Caco-2 (cell line): ENCODE measurements at regions of chr16 and their contacts with region 1.

Region 1: GRCh38 chr16:58129097-58129936 is at the start of gene CFAP20:
- DNase-seq: peak; percentile 100
- H3K4me3 ChIP-seq: peak within 1 kb of the TSS; percentile 92
- H3K4me3 Mint-ChIP-seq: peak within 1 kb of the TSS; percentile 68
- H3K27ac Mint-ChIP-seq: peak within 1 kb of the TSS; percentile 49
- H3K4me1 ChIP-seq: peaks cover 21% of the 10 kb centered on the region
- H3K4me1 Mint-ChIP-seq: peaks cover 21% of the 10 kb centered on the region
- H3K27me3 ChIP-seq: no peaks in the 10 kb centered on the region
- H3K27me3 Mint-ChIP-seq: no peaks in the 10 kb centered on the region
- CTCF ChIP-seq: no peak
- total RNA-seq, gene CFAP20: 69.4 and 73.2 TPM in 2 replicates

Region 2: GRCh38 chr16:57899771-57900661 is 229.3 kb before region 1 on chr16:
- CTCF ChIA-PET with region 1: no interaction called
- POLR2A ChIA-PET with region 1: interaction called, 5 read pairs
- intact Hi-C with region 1: loop called (anchors 5 kb)
- DNase-seq: peak; percentile 83 to 84
- H3K4me3 ChIP-seq: no peak overlapping the region
- H3K4me3 Mint-ChIP-seq: no peak overlapping the region
- H3K27ac Mint-ChIP-seq: no peak overlapping the region
- H3K4me1 ChIP-seq: peaks cover 10% of the 10 kb centered on the region
- H3K4me1 Mint-ChIP-seq: peaks cover 20% of the 10 kb centered on the region
- H3K27me3 ChIP-seq: no peaks in the 10 kb centered on the region
- H3K27me3 Mint-ChIP-seq: no peaks in the 10 kb centered on the region
- CTCF ChIP-seq: peak; percentile 92 to 96

Region 3: GRCh38 chr16:58057121-58057520 is 72.2 kb before region 1 on chr16:
- CTCF ChIA-PET with region 1: no interaction called
- POLR2A ChIA-PET with region 1: no interaction called
- intact Hi-C with region 1: no loop called
- DNase-seq: no peak
- H3K4me3 ChIP-seq: no peak overlapping the region
- H3K4me3 Mint-ChIP-seq: no peak overlapping the region
- H3K27ac Mint-ChIP-seq: no peak overlapping the region
- H3K4me1 ChIP-seq: no peaks in the 10 kb centered on the region
- H3K4me1 Mint-ChIP-seq: no peaks in the 10 kb centered on the region
- H3K27me3 ChIP-seq: no peaks in the 10 kb centered on the region
- H3K27me3 Mint-ChIP-seq: no peaks in the 10 kb centered on the region
- CTCF ChIP-seq: no peak

Region 4: DNA sequence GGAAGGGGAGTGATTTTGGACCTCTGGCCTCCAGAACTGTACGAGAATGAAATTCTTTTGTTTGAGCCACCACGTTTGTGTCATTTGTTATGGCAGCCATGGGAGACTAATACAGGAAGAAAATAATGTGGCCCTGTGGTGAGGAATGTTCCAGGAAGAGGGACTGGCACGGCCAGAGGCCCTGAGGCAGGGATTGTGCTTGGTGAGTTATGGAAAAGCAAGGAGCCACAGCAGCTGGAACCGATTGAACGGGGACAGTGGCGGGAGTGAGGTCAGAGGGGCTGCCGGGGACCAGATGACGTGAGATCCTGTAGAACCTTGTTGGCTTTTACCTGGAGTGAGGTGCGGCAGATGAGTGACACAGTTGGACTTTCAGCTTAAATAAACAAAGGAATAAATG is 51.5 kb before region 1 on chr16:
- CTCF ChIA-PET with region 1: no interaction called
- POLR2A ChIA-PET with region 1: no interaction called
- intact Hi-C with region 1: no loop called
- DNase-seq: no peak
- H3K4me3 ChIP-seq: no peak overlapping the region
- H3K4me3 Mint-ChIP-seq: no peak overlapping the region
- H3K27ac Mint-ChIP-seq: no peak overlapping the region
- H3K4me1 ChIP-seq: no peaks in the 10 kb centered on the region
- H3K4me1 Mint-ChIP-seq: no peaks in the 10 kb centered on the region
- H3K27me3 ChIP-seq: no peaks in the 10 kb centered on the region
- H3K27me3 Mint-ChIP-seq: no peaks in the 10 kb centered on the region
- CTCF ChIP-seq: no peak

Region 5: GRCh38 chr16:58098207-58099096 is 30.9 kb before region 1 on chr16:
- CTCF ChIA-PET with region 1: interaction called, 12 read pairs
- POLR2A ChIA-PET with region 1: interaction called, 4 read pairs
- intact Hi-C with region 1: no loop called
- DNase-seq: no peak
- H3K4me3 ChIP-seq: no peak overlapping the region
- H3K4me3 Mint-ChIP-seq: no peak overlapping the region
- H3K27ac Mint-ChIP-seq: no peak overlapping the region
- H3K4me1 ChIP-seq: no peaks in the 10 kb centered on the region
- H3K4me1 Mint-ChIP-seq: no peaks in the 10 kb centered on the region
- H3K27me3 ChIP-seq: no peaks in the 10 kb centered on the region
- H3K27me3 Mint-ChIP-seq: peaks cover 5% of the 10 kb centered on the region
- CTCF ChIP-seq: no peak

Region 6: GRCh38 chr16:58152246-58152868 is 23.0 kb after region 1 on chr16:
- CTCF ChIA-PET with region 1: no interaction called
- POLR2A ChIA-PET with region 1: interaction called, 17 read pairs
- intact Hi-C with region 1: loop called (anchors 1 kb)
- DNase-seq: peak in 1 of 2 experiments; percentile 35
- H3K4me3 ChIP-seq: no peak overlapping the region
- H3K4me3 Mint-ChIP-seq: no peak overlapping the region
- H3K27ac Mint-ChIP-seq: peak overlapping the region; percentile 32
- H3K4me1 ChIP-seq: peaks cover 11% of the 10 kb centered on the region
- H3K4me1 Mint-ChIP-seq: no peaks in the 10 kb centered on the region
- H3K27me3 ChIP-seq: no peaks in the 10 kb centered on the region
- H3K27me3 Mint-ChIP-seq: no peaks in the 10 kb centered on the region
- CTCF ChIP-seq: no peak

Region 7: DNA sequence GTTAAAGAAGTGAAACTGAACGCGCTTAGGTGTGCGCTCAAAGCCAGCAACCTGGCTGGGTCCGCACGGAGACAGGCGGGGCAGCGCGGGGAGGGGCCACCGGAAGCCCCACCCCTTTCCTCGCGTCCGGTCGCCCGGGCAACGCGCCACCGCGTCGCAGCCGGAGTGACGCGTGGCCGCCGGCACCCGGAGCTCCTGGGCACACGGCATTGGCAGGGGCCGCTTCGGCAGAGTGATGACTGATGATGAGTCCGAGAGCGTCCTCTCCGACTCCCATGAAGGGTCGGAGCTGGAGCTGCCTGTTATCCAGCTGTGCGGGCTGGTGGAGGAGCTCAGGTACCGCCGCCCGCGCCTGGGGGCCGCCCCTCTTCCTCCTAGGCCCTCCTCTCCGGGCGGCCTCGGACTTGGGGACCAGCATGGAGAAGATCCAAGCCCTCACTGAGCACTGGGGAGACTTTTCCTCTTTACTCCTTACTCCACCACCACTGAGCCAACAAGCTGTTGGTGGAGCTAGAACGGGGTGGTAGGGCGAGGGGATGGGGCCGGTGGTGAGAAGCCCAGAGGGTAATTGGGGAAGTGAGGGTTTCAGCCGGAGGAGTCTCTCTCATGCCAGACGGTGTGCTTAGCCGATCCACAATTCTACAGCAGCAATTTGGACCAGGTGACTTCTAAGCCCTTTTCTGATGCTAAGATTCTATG is 120.6 kb after region 1 on chr16:
- CTCF ChIA-PET with region 1: no interaction called
- POLR2A ChIA-PET with region 1: no interaction called
- intact Hi-C with region 1: loop called (anchors 1 kb)
- DNase-seq: peak; percentile 70 to 91
- H3K4me3 ChIP-seq: peak overlapping the region; percentile 77
- H3K4me3 Mint-ChIP-seq: peak overlapping the region; percentile 89
- H3K27ac Mint-ChIP-seq: peak overlapping the region; percentile 74
- H3K4me1 ChIP-seq: no peaks in the 10 kb centered on the region
- H3K4me1 Mint-ChIP-seq: no peaks in the 10 kb centered on the region
- H3K27me3 ChIP-seq: no peaks in the 10 kb centered on the region
- H3K27me3 Mint-ChIP-seq: no peaks in the 10 kb centered on the region
- CTCF ChIP-seq: no peak